ENCODE measurements at regions of chr11 and their contacts with region 1.

Region 1: GRCh38 chr11:842370-843002 is at the starts of genes POLR2L and TSPAN4:
- DNase-seq: peak; percentile 88
- H3K4me3 Mint-ChIP-seq: peak within 1 kb of the TSS; percentile 84
- H3K27ac Mint-ChIP-seq: peak within 1 kb of the TSS; percentile 75
- H3K4me1 Mint-ChIP-seq: peaks cover 27% of the 10 kb centered on the region
- H3K27me3 Mint-ChIP-seq: no peaks in the 10 kb centered on the region
- total RNA-seq, gene POLR2L: 68.1 to 68.2 TPM
- total RNA-seq, gene TSPAN4: 5.0 to 6.3 TPM

Region 2: DNA sequence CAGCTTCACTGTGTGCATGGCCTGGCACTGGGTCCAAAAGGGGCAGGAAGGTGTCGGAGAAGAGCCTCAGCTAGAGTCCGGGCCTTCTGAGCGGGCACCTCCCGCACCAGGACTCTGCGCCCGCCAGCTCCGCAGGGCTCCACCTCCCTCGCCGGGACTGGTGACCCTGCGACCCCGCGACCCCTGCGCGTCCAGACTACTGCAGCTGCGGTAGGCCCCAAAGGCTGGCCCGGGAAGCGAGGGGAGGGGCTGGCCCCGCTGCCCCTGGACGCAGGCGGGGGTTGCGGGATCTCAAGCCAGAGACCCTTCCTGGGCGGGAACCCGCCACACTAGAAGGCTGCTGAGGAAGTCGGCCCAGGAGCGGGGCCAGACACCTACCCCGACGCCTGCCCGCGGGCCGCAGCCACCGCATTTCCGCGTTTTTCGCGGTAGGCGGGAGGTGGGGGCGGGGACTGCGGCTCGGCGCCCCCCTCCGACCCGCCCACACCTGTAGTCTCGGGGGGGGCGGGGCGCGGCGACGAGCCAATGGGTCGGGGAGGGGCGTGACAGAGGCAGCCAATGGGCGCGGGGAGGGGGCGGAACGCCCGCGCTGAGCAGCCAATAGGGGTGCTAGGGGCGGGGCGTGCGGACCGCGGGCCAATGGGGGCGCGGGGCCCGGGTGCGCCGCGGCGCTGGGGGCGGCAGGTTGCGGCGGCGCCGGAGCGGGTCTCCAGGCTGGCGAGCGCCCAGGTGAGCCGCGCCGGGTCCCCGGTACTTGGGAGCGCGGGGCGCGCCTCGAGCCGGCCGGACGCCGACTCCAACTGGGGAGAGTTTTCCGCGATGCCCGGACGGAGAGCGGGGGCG is 282.0 kb before region 1 on chr11 and contains the starts of genes LMNTD2 and RASSF7:
- CTCF ChIA-PET with region 1: no interaction called
- intact Hi-C with region 1: no loop called
- DNase-seq: peak; percentile 95
- H3K4me3 Mint-ChIP-seq: peak within 1 kb of the TSS; percentile 84
- H3K27ac Mint-ChIP-seq: peak within 1 kb of the TSS; percentile 76
- H3K4me1 Mint-ChIP-seq: peaks cover 12% of the 10 kb centered on the region
- H3K27me3 Mint-ChIP-seq: peaks cover 3% of the 10 kb centered on the region
- total RNA-seq, gene LMNTD2: 4.5 to 5.2 TPM
- total RNA-seq, gene RASSF7: 8.3 to 9.9 TPM

Region 3: GRCh38 chr11:777288-778255 is 64.9 kb before region 1 on chr11 and contains the start of gene GATD1:
- CTCF ChIA-PET with region 1: no interaction called
- intact Hi-C with region 1: loop called (anchors 2 kb)
- DNase-seq: peak; percentile 93
- H3K4me3 Mint-ChIP-seq: peak within 1 kb of the TSS; percentile 87
- H3K27ac Mint-ChIP-seq: peak within 1 kb of the TSS; percentile 74
- H3K4me1 Mint-ChIP-seq: peaks cover 30% of the 10 kb centered on the region
- H3K27me3 Mint-ChIP-seq: no peaks in the 10 kb centered on the region
- total RNA-seq, gene GATD1: 33.0 to 34.3 TPM

Region 4: GRCh38 chr11:809287-810039 is 33.0 kb before region 1 on chr11 and contains the start of gene RPLP2:
- CTCF ChIA-PET with region 1: no interaction called
- intact Hi-C with region 1: loop called (anchors 1 kb)
- DNase-seq: peak; percentile 99
- H3K4me3 Mint-ChIP-seq: peak within 1 kb of the TSS; percentile 84
- H3K27ac Mint-ChIP-seq: peak within 1 kb of the TSS; percentile 97
- H3K4me1 Mint-ChIP-seq: peaks cover 33% of the 10 kb centered on the region
- H3K27me3 Mint-ChIP-seq: no peaks in the 10 kb centered on the region
- total RNA-seq, gene RPLP2: 3,807 to 3,940 TPM

Region 5: DNA sequence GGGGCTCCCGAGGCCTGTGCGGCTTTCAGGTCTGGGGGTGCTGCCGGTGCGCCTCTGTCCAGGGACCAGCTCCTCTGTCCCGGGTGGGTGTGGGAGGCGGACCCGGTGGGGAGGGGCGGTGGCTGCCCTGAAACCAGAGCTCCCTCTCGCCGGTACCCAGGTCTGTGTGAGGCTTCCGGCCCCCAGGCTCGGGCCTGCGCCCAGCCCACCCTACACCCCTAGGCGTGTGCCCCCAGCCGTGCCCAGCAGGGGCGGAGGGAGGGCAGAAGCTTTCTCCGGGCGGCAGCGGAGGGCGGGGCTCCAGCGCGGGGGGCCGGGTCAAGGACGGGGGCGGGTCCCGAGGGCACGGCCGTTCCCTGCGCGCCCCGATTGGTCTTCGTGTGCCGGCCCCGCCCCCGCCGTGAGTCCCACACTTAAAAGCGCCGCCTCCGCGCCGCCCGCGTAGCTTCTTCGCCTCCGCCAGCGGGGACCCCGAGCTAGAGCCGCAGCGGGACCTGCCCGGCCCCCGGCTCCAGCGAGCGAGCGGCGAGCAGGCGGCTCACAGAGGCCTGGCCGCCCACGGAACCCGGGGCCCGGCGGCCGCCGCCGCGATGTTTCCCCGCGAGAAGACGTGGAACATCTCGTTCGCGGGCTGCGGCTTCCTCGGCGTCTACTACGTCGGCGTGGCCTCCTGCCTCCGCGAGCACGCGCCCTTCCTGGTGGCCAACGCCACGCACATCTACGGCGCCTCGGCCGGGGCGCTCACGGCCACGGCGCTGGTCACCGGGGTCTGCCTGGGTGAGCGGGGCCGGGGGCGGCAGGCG is 23.2 kb before region 1 on chr11:
- CTCF ChIA-PET with region 1: no interaction called
- intact Hi-C with region 1: loop called (anchors 1 kb)
- DNase-seq: peak; percentile 89
- H3K4me3 Mint-ChIP-seq: peak overlapping the region; percentile 75
- H3K27ac Mint-ChIP-seq: no peak overlapping the region
- H3K4me1 Mint-ChIP-seq: peaks cover 13% of the 10 kb centered on the region
- H3K27me3 Mint-ChIP-seq: no peaks in the 10 kb centered on the region

Region 6: DNA sequence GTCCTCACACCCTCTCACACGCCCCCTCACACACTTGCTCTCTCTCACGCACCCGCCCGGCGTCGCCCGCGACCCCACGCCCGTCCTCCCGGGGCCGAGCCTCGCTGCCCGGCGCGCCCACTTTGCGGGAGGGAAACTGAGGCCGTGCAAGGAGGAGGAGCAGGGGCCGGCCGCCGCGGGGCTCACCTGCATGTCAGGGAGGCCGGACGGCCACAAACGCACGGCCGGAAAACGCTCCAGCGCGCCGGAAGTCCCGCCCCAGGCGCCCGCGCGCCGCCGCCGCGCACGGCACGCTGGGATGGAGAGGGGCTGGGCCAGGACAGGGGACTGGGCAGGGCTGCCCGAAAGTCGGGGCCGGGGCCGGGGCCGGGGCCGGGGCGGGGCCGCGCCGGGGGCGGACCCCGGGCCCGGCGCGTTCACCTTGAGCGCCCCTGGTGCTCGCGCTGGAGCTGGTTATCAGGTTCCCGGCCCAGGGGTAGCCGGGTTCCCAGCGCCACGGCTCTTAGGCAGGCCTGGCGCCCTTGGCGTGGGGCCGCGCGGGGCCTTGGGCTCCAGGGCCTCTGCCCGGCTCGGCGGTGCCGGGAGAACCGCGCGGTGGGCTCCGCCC is 68.2 kb after region 1 on chr11 and contains the start of gene CHID1:
- CTCF ChIA-PET with region 1: interaction called, 4 read pairs
- intact Hi-C with region 1: loop called (anchors 2 kb)
- DNase-seq: peak; percentile 87
- H3K4me3 Mint-ChIP-seq: peak within 1 kb of the TSS; percentile 91
- H3K27ac Mint-ChIP-seq: peak within 1 kb of the TSS; percentile 65
- H3K4me1 Mint-ChIP-seq: peaks cover 24% of the 10 kb centered on the region
- H3K27me3 Mint-ChIP-seq: no peaks in the 10 kb centered on the region
- total RNA-seq, gene CHID1: 51.8 to 56.3 TPM

Region 7: DNA sequence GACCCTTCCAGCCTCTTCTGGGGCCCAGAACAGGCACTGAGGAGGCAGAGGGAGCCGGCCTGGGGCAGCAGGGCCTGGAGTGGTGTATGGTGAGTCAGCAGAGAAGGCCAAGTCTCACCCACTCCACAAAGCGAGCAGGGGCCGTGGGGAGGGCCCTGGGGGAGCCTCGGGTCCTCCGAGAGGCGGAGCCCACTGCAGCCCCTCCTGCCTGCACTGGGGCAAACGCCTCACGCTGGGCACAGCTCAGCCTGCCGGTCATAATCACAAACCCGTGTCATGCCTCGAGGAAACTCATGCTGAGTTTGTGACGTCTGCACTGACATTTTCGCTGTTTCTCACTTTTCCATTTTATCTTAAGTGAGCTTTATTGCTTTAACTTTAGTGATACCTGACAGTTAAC is 428.5 kb after region 1 on chr11:
- CTCF ChIA-PET with region 1: no interaction called
- intact Hi-C with region 1: no loop called
- DNase-seq: no peak
- H3K4me3 Mint-ChIP-seq: no peak overlapping the region
- H3K27ac Mint-ChIP-seq: no peak overlapping the region
- H3K4me1 Mint-ChIP-seq: no peaks in the 10 kb centered on the region
- H3K27me3 Mint-ChIP-seq: no peaks in the 10 kb centered on the region

Measured in activated naive CD4-positive, alpha-beta T cell treated with anti-CD3 and anti-CD28 coated beads for 36 hours (primary cell).